ENCODE measurements at regions of chr1 and their contacts with region 1.

Region 1: DNA sequence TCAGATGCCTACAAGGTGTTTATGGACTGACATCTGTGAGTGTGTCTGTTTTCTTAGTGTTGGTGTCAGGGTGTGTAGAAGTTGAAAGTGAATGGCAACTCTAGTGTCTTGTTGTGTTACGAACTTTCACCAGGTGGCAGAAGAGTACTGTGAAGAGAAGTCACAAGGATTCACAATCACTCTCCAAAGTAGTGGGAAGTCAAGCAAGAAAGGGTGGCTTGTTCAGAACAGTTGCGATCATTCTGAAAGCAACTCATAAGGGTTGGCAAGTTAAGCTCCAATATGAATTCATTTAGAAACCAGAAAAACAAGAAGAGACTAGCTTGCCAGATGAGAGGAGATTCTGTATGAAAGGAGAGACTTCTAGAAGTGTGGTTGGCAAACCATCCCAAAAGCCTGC is 86.1 kb downstream of the FASLG start:
- DNase-seq: peak; percentile 79
- ATAC-seq: peak; percentile 86
- H3K4me3 ChIP-seq: no peak overlapping the region
- H3K27ac ChIP-seq: no peak overlapping the region
- H3K4me1 ChIP-seq: peaks cover 20% of the 10 kb centered on the region
- H3K27me3 ChIP-seq: 0 out of 4 replicates have a peak, but pooled peaks cover 0 to 5% of the 10 kb centered on the region in 2 experiments
- CTCF ChIP-seq: peak; percentile 70 to 86 (median 78)
- EP300 ChIP-seq: no peak
- POLR2A ChIP-seq: no peak
- RAD21 ChIP-seq: peak; percentile 97

Region 2: DNA sequence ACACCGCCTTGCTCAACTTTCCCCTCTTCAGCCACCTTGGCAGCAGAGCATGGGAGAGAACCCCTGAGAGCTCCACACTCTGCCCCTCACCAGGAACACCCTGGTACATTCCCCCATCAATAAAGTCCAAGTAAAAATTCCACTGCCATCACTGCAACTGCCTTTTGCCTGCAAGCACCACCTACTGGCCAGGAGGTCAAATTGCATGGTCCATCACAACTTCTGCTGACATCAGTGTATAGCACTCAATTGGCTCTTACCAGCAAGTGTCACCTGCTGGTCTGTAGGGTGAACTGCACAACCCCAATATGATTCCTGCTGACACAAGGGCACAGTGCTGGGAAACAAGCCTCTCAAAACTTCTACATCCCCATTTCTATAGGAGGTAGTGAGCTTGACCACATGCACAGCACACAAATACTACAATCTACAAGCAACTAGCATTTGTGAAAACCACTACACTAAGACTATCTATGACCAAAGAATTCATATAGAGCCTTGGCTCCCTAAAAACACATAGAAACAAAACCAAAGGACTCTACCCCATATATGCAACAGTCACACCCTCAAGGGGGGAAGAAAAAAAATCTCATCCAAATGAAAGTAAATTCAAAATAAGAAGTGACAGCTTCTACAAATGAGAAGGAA is 16.9 kb before region 1 on chr1:
- CTCF ChIA-PET with region 1: interaction called, 8 read pairs
- POLR2A ChIA-PET with region 1: interaction called, 3 read pairs
- RAD21 ChIA-PET with region 1: interaction called, 7 read pairs
- SMC1A ChIA-PET with region 1: interaction called, 10 read pairs
- in situ Hi-C with region 1: no loop called
- intact Hi-C with region 1: no loop called
- DNase-seq: no peak
- ATAC-seq: peak; percentile 84
- H3K4me3 ChIP-seq: no peak overlapping the region
- H3K27ac ChIP-seq: no peak overlapping the region
- H3K4me1 ChIP-seq: peaks cover 7% of the 10 kb centered on the region
- H3K27me3 ChIP-seq: no peaks in the 10 kb centered on the region
- CTCF ChIP-seq: peak; percentile 39 to 85 (median 57)
- EP300 ChIP-seq: no peak
- POLR2A ChIP-seq: no peak
- RAD21 ChIP-seq: peak; percentile 52

Region 3: DNA sequence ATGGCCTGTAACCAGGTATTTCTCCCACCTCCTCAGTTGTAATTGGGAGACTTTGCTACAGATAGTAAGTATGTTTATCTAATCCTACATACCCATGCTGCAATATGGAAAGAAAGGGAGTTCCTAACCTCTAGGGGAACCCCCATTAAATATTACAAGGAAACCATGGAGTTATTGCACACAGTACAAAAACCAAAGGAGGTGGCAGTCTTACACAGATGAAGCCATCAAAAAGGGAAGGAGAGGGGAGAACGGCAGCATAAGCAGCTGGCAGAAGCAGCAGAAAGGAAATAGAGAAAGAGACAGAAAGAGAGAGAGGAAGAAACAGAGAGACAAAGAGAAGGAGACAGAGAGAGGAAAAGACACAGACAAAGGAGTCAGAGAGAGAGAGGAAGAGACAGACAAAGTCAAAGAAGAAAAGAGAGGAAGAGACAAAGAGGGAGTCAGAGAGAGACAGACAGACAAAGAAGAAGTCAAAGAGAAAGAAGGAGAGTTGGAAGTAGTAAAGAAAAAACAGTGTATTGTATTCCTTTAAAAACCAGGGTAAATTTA is 56.8 kb after region 1 on chr1:
- CTCF ChIA-PET with region 1: no interaction called
- POLR2A ChIA-PET with region 1: no interaction called
- RAD21 ChIA-PET with region 1: no interaction called
- SMC1A ChIA-PET with region 1: no interaction called
- in situ Hi-C with region 1: no loop called
- intact Hi-C with region 1: no loop called
- DNase-seq: no peak
- ATAC-seq: no peak
- H3K4me3 ChIP-seq: no peak overlapping the region
- H3K27ac ChIP-seq: no peak overlapping the region
- H3K4me1 ChIP-seq: no peaks in the 10 kb centered on the region
- H3K27me3 ChIP-seq: no peaks in the 10 kb centered on the region; a peak in 1 of 4 replicates
- CTCF ChIP-seq: no peak
- EP300 ChIP-seq: no peak
- POLR2A ChIP-seq: no peak
- RAD21 ChIP-seq: no peak

Region 4: DNA sequence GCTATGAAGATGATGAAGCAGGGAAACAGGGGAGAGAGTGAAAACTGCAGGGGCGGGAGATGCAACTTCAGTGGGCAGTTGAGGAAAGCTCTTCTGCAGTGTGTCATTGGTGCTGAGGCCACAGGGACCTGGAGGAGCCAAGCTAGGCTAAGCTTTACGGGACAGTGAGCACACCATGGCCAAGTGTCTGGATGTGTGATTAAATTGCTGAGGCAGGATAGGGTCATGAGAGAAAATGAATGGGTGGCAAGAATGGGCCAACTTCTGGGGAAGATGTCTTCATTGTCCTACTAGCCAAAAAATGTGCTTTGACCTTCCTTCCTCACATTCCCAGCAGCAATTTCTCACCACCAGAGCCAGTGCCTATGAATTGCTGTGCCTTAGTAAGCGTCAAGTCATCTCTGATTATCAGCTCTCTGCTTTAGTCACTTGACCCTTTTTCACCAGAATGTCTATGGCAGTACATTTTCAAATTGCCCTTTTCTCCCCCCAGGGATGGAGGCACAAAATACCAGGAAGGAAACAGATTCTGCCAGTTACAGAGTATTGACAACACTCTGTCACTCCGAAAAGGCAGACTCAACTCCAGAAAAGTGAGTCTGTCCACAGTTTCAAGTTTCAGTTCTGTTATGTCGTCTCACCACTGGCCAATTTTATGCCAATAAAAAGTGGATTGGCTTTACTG is 138.2 kb after region 1 on chr1:
- CTCF ChIA-PET with region 1: no interaction called
- POLR2A ChIA-PET with region 1: no interaction called
- RAD21 ChIA-PET with region 1: no interaction called
- SMC1A ChIA-PET with region 1: no interaction called
- in situ Hi-C with region 1: no loop called
- intact Hi-C with region 1: no loop called
- DNase-seq: no peak
- ATAC-seq: peak; percentile 80
- H3K4me3 ChIP-seq: no peak overlapping the region
- H3K27ac ChIP-seq: no peak overlapping the region
- H3K4me1 ChIP-seq: peaks cover 13% of the 10 kb centered on the region
- H3K27me3 ChIP-seq: peaks cover 0 to 4% of the 10 kb centered on the region in 2 experiments; a peak in 2 of 4 replicates
- CTCF ChIP-seq: no peak
- EP300 ChIP-seq: no peak
- POLR2A ChIP-seq: no peak
- RAD21 ChIP-seq: no peak

Region 5: GRCh38 chr1:172928412-172928811 is 183.4 kb after region 1 on chr1:
- CTCF ChIA-PET with region 1: no interaction called
- POLR2A ChIA-PET with region 1: no interaction called
- RAD21 ChIA-PET with region 1: no interaction called
- SMC1A ChIA-PET with region 1: no interaction called
- in situ Hi-C with region 1: no loop called
- intact Hi-C with region 1: no loop called
- DNase-seq: no peak
- ATAC-seq: no peak
- H3K4me3 ChIP-seq: no peak overlapping the region
- H3K27ac ChIP-seq: no peak overlapping the region
- H3K4me1 ChIP-seq: no peaks in the 10 kb centered on the region
- H3K27me3 ChIP-seq: peaks cover 0 to 2% of the 10 kb centered on the region in 2 experiments; a peak in 1 of 4 replicates
- CTCF ChIP-seq: no peak
- EP300 ChIP-seq: no peak
- POLR2A ChIP-seq: no peak
- RAD21 ChIP-seq: no peak

Region 6: DNA sequence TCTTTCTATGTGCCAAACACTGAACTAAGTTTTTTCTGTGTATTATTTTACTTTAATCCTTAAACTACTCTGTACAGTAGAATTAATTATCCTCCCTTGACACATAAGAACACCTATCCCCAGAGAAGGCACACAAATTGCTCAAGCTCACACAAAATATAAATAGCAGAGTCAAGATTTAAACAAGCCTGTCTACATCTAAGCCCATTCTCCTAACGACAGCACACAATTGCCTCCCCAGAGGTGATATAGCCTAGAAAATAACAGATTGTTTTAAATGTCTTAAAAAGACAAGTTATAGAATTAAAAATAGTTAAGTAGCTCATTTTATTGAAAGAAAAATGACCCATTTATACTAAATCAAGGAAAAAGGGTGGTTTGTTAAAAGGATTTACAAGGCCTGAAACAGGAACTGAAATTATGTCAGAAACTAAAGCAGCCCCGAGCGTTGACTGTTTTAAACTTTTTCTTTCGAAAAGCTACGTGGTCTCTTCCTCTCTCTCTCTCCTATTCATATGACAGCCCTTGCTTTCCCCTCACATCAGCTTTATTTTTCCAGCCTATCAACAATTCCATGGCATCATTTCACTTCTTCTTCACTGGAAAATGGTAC is 275.2 kb after region 1 on chr1:
- CTCF ChIA-PET with region 1: interaction called, 11 read pairs
- POLR2A ChIA-PET with region 1: no interaction called
- RAD21 ChIA-PET with region 1: interaction called, 4 read pairs
- SMC1A ChIA-PET with region 1: no interaction called
- in situ Hi-C with region 1: no loop called
- intact Hi-C with region 1: no loop called
- DNase-seq: peak; percentile 66
- ATAC-seq: peak; percentile 96
- H3K4me3 ChIP-seq: no peak overlapping the region
- H3K27ac ChIP-seq: peak overlapping the region; percentile 76
- H3K4me1 ChIP-seq: peaks cover 12% of the 10 kb centered on the region
- H3K27me3 ChIP-seq: no peaks in the 10 kb centered on the region
- CTCF ChIP-seq: no peak
- EP300 ChIP-seq: peak; percentile 47 to 62; a peak in 2 of 4 replicates
- POLR2A ChIP-seq: no peak
- RAD21 ChIP-seq: no peak

Region 7: GRCh38 chr1:173202430-173203145 is 457.6 kb after region 1 on chr1:
- CTCF ChIA-PET with region 1: interaction called, 322 read pairs
- POLR2A ChIA-PET with region 1: interaction called, 8 read pairs
- RAD21 ChIA-PET with region 1: interaction called, 201 read pairs
- SMC1A ChIA-PET with region 1: interaction called, 281 read pairs
- in situ Hi-C with region 1: loop called (anchors 5 kb)
- intact Hi-C with region 1: loop called (anchors 1 kb)
- DNase-seq: no peak
- ATAC-seq: peak; percentile 54
- H3K4me3 ChIP-seq: no peak overlapping the region
- H3K27ac ChIP-seq: no peak overlapping the region
- H3K4me1 ChIP-seq: peaks cover 14% of the 10 kb centered on the region
- H3K27me3 ChIP-seq: no peaks in the 10 kb centered on the region
- CTCF ChIP-seq: peak; percentile 54 to 69 (median 62)
- EP300 ChIP-seq: no peak
- POLR2A ChIP-seq: no peak
- RAD21 ChIP-seq: peak; percentile 90

Region 8: GRCh38 chr1:173429471-173430402 is 684.7 kb after region 1 on chr1:
- CTCF ChIA-PET with region 1: interaction called, 12 read pairs
- POLR2A ChIA-PET with region 1: no interaction called
- RAD21 ChIA-PET with region 1: interaction called, 11 read pairs
- SMC1A ChIA-PET with region 1: interaction called, 15 read pairs
- in situ Hi-C with region 1: no loop called
- intact Hi-C with region 1: no loop called
- DNase-seq: no peak
- ATAC-seq: peak; percentile 92
- H3K4me3 ChIP-seq: no peak overlapping the region
- H3K27ac ChIP-seq: peak overlapping the region; percentile 7
- H3K4me1 ChIP-seq: peaks cover 19% of the 10 kb centered on the region
- H3K27me3 ChIP-seq: no peaks in the 10 kb centered on the region
- CTCF ChIP-seq: peak; percentile 64 to 76 (median 75)
- EP300 ChIP-seq: no peak
- POLR2A ChIP-seq: peak; percentile 17; the same call in 1 of the 2 replicates
- RAD21 ChIP-seq: peak; percentile 46

Region 9: GRCh38 chr1:174074757-174075156 is 1329.7 kb after region 1 on chr1:
- CTCF ChIA-PET with region 1: interaction called, 3 read pairs
- POLR2A ChIA-PET with region 1: no interaction called
- RAD21 ChIA-PET with region 1: no interaction called
- SMC1A ChIA-PET with region 1: interaction called, 3 read pairs
- in situ Hi-C with region 1: no loop called
- intact Hi-C with region 1: loop called (anchors 5 kb)
- DNase-seq: no peak
- ATAC-seq: no peak
- H3K4me3 ChIP-seq: no peak overlapping the region
- H3K27ac ChIP-seq: no peak overlapping the region
- H3K4me1 ChIP-seq: no peaks in the 10 kb centered on the region
- H3K27me3 ChIP-seq: no peaks in the 10 kb centered on the region
- CTCF ChIP-seq: peak in 1 of 3 experiments; percentile 11; a peak in 3 of 6 replicates
- EP300 ChIP-seq: no peak
- POLR2A ChIP-seq: no peak
- RAD21 ChIP-seq: peak; percentile 60

Region 10: DNA sequence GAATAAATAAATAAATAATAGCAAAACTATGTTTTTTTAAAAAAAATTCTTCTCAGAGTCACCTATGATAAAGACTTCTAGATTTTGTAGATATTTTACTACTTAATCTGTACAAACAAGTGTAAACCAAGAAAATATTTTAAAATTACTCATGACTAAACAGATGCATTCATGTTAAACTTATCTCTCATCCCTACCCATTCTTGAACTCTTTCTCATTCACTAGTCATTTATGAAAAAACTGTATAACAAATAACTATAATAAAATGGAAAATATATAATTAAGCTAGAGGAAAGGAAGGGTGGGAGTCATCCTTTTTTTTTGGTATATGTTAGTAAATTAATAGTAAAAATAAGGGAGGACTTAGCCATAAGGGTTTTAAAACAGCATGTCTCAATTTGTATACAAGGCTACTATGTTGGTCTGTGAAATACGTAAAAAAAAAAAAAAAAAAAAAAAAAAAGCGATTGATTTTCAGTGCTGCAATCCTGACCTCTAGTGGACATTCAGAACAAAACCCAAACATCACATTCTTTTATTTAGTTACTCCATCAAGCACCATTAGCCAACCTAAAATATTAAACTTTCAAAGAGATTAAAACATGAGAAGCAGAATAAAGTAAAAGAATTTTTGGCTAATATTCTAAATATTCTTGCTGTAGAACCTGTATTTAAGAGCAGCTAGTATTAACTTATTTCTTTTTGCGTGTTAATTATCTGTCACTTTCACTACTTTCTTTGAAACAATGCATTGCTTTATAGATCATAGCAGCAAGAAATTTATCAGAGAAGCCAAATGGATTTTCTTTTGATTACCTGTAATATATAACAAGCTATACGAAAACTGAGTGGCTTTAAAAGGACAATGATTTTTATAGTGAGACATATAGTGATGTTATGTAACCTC is 1998.9 kb after region 1 on chr1:
- CTCF ChIA-PET with region 1: no interaction called
- POLR2A ChIA-PET with region 1: no interaction called
- RAD21 ChIA-PET with region 1: no interaction called
- SMC1A ChIA-PET with region 1: no interaction called
- in situ Hi-C with region 1: loop called (anchors 10 kb)
- intact Hi-C with region 1: loop called (anchors 5 kb)
- DNase-seq: no peak
- ATAC-seq: peak; percentile 39
- H3K4me3 ChIP-seq: no peak overlapping the region
- H3K27ac ChIP-seq: no peak overlapping the region
- H3K4me1 ChIP-seq: peaks cover 9% of the 10 kb centered on the region; the same call in 1 of the 2 replicates
- H3K27me3 ChIP-seq: no peaks in the 10 kb centered on the region
- CTCF ChIP-seq: peak; percentile 36 to 63 (median 41); a peak in 5 of 6 replicates
- EP300 ChIP-seq: no peak
- POLR2A ChIP-seq: no peak
- RAD21 ChIP-seq: peak; percentile 80